B cell (primary cell): ENCODE measurements at regions of chr6 and their contacts with region 1.

Region 1: GRCh38 chr6:149468179-149468578 is 16.6 kb downstream of the ZC3H12D start:
- DNase-seq: peak; percentile 79
- ATAC-seq: peak; percentile 48
- H3K4me3 ChIP-seq: peak overlapping the region; percentile 21 to 67 (median 40)
- H3K4me3 Mint-ChIP-seq: peak overlapping the region; percentile 88
- H3K27ac ChIP-seq: peak overlapping the region; percentile 90 to 97
- H3K27ac Mint-ChIP-seq: peak overlapping the region; percentile 95
- H3K4me1 ChIP-seq: peaks cover 93 to 100% of the 10 kb centered on the region in 2 donors
- H3K4me1 Mint-ChIP-seq: peaks cover 90% of the 10 kb centered on the region
- H3K27me3 ChIP-seq: no peaks in the 10 kb centered on the region
- H3K27me3 Mint-ChIP-seq: no peaks in the 10 kb centered on the region
- CTCF ChIP-seq: no peak

Region 2: GRCh38 chr6:149284904-149285303 is 183.3 kb before region 1 on chr6:
- CTCF ChIA-PET with region 1: no interaction called
- POLR2A ChIA-PET with region 1: no interaction called
- intact Hi-C with region 1: no loop called
- DNase-seq: no peak
- ATAC-seq: no peak
- H3K4me3 ChIP-seq: no peak overlapping the region
- H3K4me3 Mint-ChIP-seq: no peak overlapping the region
- H3K27ac ChIP-seq: no peak overlapping the region
- H3K27ac Mint-ChIP-seq: no peak overlapping the region
- H3K4me1 ChIP-seq: no peaks in the 10 kb centered on the region
- H3K4me1 Mint-ChIP-seq: no peaks in the 10 kb centered on the region
- H3K27me3 ChIP-seq: no peaks in the 10 kb centered on the region
- H3K27me3 Mint-ChIP-seq: no peaks in the 10 kb centered on the region
- CTCF ChIP-seq: no peak

Region 3: GRCh38 chr6:149454386-149454848 is 13.8 kb before region 1 on chr6:
- CTCF ChIA-PET with region 1: interaction called, 5 read pairs
- POLR2A ChIA-PET with region 1: interaction called, 4 read pairs
- intact Hi-C with region 1: loop called (anchors 2 kb)
- DNase-seq: no peak
- ATAC-seq: no peak
- H3K4me3 ChIP-seq: no peak overlapping the region
- H3K4me3 Mint-ChIP-seq: no peak overlapping the region
- H3K27ac ChIP-seq: peak overlapping the region in 1 of 2 donors; percentile 55
- H3K27ac Mint-ChIP-seq: no peak overlapping the region
- H3K4me1 ChIP-seq: no peaks in the 10 kb centered on the region
- H3K4me1 Mint-ChIP-seq: peaks cover 17% of the 10 kb centered on the region
- H3K27me3 ChIP-seq: no peaks in the 10 kb centered on the region
- H3K27me3 Mint-ChIP-seq: no peaks in the 10 kb centered on the region
- CTCF ChIP-seq: no peak

Region 4: GRCh38 chr6:149493761-149494320 is 25.7 kb after region 1 on chr6:
- CTCF ChIA-PET with region 1: interaction called, 15 read pairs
- POLR2A ChIA-PET with region 1: interaction called, 23 read pairs
- intact Hi-C with region 1: no loop called
- DNase-seq: no peak
- ATAC-seq: no peak
- H3K4me3 ChIP-seq: peak overlapping the region in 1 of 5 experiments; percentile 37
- H3K4me3 Mint-ChIP-seq: peak overlapping the region; percentile 71
- H3K27ac ChIP-seq: peak overlapping the region in 1 of 2 donors; percentile 79
- H3K27ac Mint-ChIP-seq: peak overlapping the region; percentile 79
- H3K4me1 ChIP-seq: peaks cover 51 to 56% of the 10 kb centered on the region in 2 donors
- H3K4me1 Mint-ChIP-seq: peaks cover 78% of the 10 kb centered on the region
- H3K27me3 ChIP-seq: no peaks in the 10 kb centered on the region
- H3K27me3 Mint-ChIP-seq: no peaks in the 10 kb centered on the region
- CTCF ChIP-seq: no peak

Region 5: GRCh38 chr6:149580880-149581279 is 112.7 kb after region 1 on chr6:
- CTCF ChIA-PET with region 1: no interaction called
- POLR2A ChIA-PET with region 1: no interaction called
- intact Hi-C with region 1: no loop called
- DNase-seq: no peak
- ATAC-seq: no peak
- H3K4me3 ChIP-seq: no peak overlapping the region
- H3K4me3 Mint-ChIP-seq: no peak overlapping the region
- H3K27ac ChIP-seq: no peak overlapping the region
- H3K27ac Mint-ChIP-seq: no peak overlapping the region
- H3K4me1 ChIP-seq: no peaks in the 10 kb centered on the region
- H3K4me1 Mint-ChIP-seq: no peaks in the 10 kb centered on the region
- H3K27me3 ChIP-seq: no peaks in the 10 kb centered on the region
- H3K27me3 Mint-ChIP-seq: no peaks in the 10 kb centered on the region
- CTCF ChIP-seq: no peak